T-cell (primary cell): ENCODE measurements at regions of chr9 and their contacts with region 1.

Region 1: GRCh38 chr9:99720455-99721050 is 101.1 kb upstream of the NR4A3 start:
- DNase-seq: peak in 4 of 35 experiments; percentile 4 to 53 (median 9)
- ATAC-seq: peak; percentile 75 to 87 (median 82)
- H3K4me3 ChIP-seq: peak overlapping the region; percentile 16 to 35
- H3K4me3 Mint-ChIP-seq: peak overlapping the region; percentile 72 to 78 (median 77)
- H3K27ac ChIP-seq: peak overlapping the region; percentile 70
- H3K27ac Mint-ChIP-seq: peak overlapping the region; percentile 95 to 99
- H3K4me1 ChIP-seq: peaks cover 7 to 17% of the 10 kb centered on the region in 2 experiments
- H3K4me1 Mint-ChIP-seq: peaks cover 23 to 33% (median 32%) of the 10 kb centered on the region in 3 donors
- H3K27me3 ChIP-seq: no peaks in the 10 kb centered on the region
- H3K27me3 Mint-ChIP-seq: no peaks in the 10 kb centered on the region

Region 2: DNA sequence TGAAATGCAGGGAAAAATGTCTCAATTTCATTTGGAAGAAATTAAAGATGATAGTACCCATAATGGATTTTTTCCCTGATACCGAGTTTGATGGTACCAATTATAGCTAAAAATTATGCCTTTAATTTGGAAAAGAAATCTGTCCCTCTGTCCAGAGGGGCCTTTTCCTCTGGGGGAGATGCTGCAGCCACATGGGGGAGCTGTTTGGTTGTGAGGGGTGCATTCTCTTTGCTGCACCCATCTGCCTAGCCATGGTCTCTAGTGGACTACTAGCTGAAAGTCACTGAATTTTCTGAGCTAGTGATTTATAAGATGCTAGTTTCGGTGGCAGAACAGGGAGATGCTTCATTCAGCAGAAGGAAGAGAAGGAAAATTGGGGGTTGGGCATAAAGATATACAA is 488.8 kb before region 1 on chr9:
- CTCF ChIA-PET with region 1: interaction called in 1 of 2 experiments, 11 read pairs
- POLR2A ChIA-PET with region 1: no interaction called
- DNase-seq: peak in 11 of 35 experiments; percentile 6 to 35 (median 23)
- ATAC-seq: no peak
- H3K4me3 ChIP-seq: no peak overlapping the region
- H3K4me3 Mint-ChIP-seq: no peak overlapping the region
- H3K27ac ChIP-seq: no peak overlapping the region
- H3K27ac Mint-ChIP-seq: no peak overlapping the region
- H3K4me1 ChIP-seq: no peaks in the 10 kb centered on the region
- H3K4me1 Mint-ChIP-seq: peaks cover 13 to 22% (median 13%) of the 10 kb centered on the region in 3 donors
- H3K27me3 ChIP-seq: no peaks in the 10 kb centered on the region
- H3K27me3 Mint-ChIP-seq: no peaks in the 10 kb centered on the region